ENCODE measurements at regions of chr16 and their contacts with region 1.

Region 1: DNA sequence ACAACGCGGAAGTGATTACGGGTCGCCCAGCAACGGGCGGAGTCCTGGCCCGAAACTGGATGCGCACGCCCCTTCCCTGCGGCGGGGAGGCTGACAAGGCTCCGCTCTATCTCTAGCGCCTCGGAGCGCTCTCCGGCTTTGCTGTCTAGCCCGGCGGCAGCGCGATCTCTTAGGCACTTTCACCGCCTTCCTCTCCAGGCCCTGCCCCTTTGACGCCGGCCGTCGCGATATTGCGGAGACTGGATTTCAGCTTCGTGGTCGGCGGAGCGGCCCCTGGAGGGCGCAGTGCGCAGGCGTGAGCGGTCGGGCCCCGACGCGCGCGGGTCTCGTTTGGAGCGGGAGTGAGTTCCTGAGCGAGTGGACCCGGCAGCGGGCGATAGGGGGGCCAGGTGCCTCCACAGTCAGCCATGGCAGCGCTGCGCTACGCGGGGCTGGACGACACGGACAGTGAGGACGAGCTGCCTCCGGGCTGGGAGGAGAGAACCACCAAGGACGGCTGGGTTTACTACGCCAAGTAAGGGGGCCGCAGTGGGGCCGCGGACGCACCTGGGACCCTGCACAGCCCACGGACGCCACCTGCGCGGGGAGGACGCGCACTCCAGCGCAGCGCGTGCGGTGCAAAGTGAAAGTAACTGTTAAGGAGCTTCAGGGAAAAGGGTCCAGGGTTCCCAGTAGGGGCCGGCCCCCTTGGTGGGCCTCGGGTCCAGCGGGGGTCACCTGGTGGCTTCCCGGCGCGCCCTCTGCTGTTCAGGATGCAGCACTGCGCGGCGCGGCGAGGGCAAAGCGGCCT is at the start of gene WWOX:
- DNase-seq: peak; percentile 95 to 98 (median 97)
- ATAC-seq: peak; percentile 96 to 98 (median 98)
- H3K4me3 ChIP-seq: peak within 1 kb of the TSS; percentile 71 to 100 (median 90)
- H3K27ac ChIP-seq: peak within 1 kb of the TSS; percentile 60 to 94 (median 87)
- H3K4me1 ChIP-seq: peaks cover 0 to 17% (median 8%) of the 10 kb centered on the region in 12 donors
- H3K27me3 ChIP-seq: peaks cover 0 to 5% (median 0%) of the 10 kb centered on the region in 9 donors
- CTCF ChIP-seq: peak; percentile 69 to 90 (median 82)
- POLR2A ChIP-seq: peak in 1 of 2 donors; percentile 81
- total RNA-seq, gene WWOX: 4.3 to 18.3 (median 10.1) TPM

Region 2: GRCh38 chr16:77450563-77451487 is 648.7 kb before region 1 on chr16:
- intact Hi-C with region 1: no loop called
- DNase-seq: no peak
- ATAC-seq: no peak
- H3K4me3 ChIP-seq: no peak overlapping the region
- H3K27ac ChIP-seq: no peak overlapping the region
- H3K4me1 ChIP-seq: no peaks in the 10 kb centered on the region
- H3K27me3 ChIP-seq: no peaks in the 10 kb centered on the region
- CTCF ChIP-seq: no peak
- POLR2A ChIP-seq: no peak

Region 3: GRCh38 chr16:77912618-77913017 is 186.9 kb before region 1 on chr16:
- intact Hi-C with region 1: no loop called
- DNase-seq: no peak
- ATAC-seq: no peak
- H3K4me3 ChIP-seq: no peak overlapping the region
- H3K27ac ChIP-seq: no peak overlapping the region
- H3K4me1 ChIP-seq: no peaks in the 10 kb centered on the region
- H3K27me3 ChIP-seq: no peaks in the 10 kb centered on the region
- CTCF ChIP-seq: no peak
- POLR2A ChIP-seq: no peak

Region 4: DNA sequence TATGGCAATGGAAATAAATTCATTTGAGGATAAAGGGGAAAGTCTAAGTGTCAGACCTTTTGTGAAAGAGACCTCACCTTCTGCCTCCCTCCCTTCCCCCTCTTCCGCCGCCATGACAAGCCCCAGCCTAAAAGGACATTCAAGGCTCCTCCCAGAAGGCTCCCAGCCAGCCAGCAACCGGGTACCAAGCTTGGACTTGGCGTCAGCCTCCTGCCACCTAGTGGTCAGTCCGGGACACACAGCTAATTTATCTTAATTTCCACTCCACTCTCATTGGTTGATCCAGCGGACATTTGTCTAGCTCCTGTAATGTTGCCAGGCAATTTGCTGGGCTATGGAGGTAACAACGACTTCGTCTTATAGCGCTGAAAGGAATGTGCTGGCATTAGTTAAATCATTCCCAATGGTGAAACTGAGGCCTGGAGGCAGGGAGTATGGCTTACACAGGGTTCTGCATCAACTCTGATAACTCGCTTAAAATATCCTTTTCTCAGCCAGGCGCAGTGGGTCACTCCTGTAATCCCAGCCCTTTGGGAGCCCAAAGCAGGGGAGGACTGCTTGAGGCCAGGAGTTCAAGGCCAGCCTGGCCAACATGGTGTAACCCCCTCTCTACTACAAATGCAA is 96.5 kb before region 1 on chr16:
- intact Hi-C with region 1: loop called in 1 of 10 experiments (anchors 10 kb)
- DNase-seq: peak; percentile 74 to 90 (median 84)
- ATAC-seq: peak; percentile 70 to 98 (median 93)
- H3K4me3 ChIP-seq: no peak overlapping the region
- H3K27ac ChIP-seq: no peak overlapping the region
- H3K4me1 ChIP-seq: peaks cover 0 to 2% (median 0%) of the 10 kb centered on the region in 12 donors
- H3K27me3 ChIP-seq: no peaks in the 10 kb centered on the region
- CTCF ChIP-seq: peak; percentile 68 to 91 (median 83)
- POLR2A ChIP-seq: no peak

Region 5: GRCh38 chr16:78045865-78046581 is 53.5 kb before region 1 on chr16:
- intact Hi-C with region 1: loop called in 1 of 10 experiments (anchors 2 kb)
- DNase-seq: peak; percentile 57 to 81 (median 75)
- ATAC-seq: peak; percentile 75 to 98 (median 94)
- H3K4me3 ChIP-seq: no peak overlapping the region
- H3K27ac ChIP-seq: no peak overlapping the region
- H3K4me1 ChIP-seq: peaks cover 0 to 6% (median 0%) of the 10 kb centered on the region in 12 donors
- H3K27me3 ChIP-seq: peaks cover 0 to 8% (median 0%) of the 10 kb centered on the region in 9 donors
- CTCF ChIP-seq: no peak
- POLR2A ChIP-seq: no peak